ENCODE measurements at regions of chr4 and their contacts with region 1.

Region 1: GRCh38 chr4:44760142-44760898 is 34.0 kb upstream of the GNPDA2 start:
- DNase-seq: no peak
- ATAC-seq: peak; percentile 50 to 73

Region 2: DNA sequence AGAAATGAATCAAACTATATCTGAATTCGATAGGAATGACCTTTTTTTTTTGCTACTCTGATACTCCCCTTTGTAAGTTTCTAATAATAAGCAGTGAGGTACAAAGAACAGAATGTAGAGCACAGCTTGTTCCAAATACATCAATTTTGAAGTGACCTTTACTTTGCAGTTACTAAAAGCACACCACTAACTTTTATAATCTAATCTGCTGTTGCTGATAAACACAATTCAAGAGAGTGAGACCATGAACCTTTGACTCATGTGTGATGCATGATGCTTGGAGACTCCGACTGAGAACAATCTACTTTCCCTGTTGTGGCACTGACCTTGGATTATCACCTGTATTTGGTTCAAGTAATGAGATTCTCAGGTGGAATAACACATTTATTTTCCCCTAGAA is 57.6 kb after region 1 on chr4:
- intact Hi-C with region 1: loop called in 1 of 2 experiments (anchors 5 kb)
- DNase-seq: no peak
- ATAC-seq: peak; percentile 90 to 92

Region 3: GRCh38 chr4:44927399-44928380 is 167.4 kb after region 1 on chr4:
- intact Hi-C with region 1: loop called in 1 of 2 experiments (anchors 10 kb)
- DNase-seq: no peak
- ATAC-seq: no peak

Region 4: DNA sequence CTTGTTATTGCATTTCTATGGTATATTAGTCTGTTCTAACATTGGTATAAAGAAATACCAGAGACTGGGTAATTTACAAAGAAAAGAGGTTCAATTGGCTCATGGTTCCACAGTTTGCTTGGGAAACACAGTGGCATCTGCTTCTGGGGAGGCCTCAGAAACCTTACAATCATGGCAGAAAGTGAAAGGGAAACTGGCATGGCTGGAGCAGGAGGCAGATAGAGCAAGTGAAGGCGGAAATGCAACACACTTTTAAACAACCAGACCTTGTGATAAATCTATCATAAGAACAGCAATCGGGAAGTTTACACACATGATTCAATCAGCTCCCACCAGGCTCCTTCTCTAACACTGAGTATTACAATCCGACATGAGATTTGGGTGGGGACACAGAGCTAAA is 312.7 kb after region 1 on chr4:
- intact Hi-C with region 1: no loop called
- DNase-seq: no peak
- ATAC-seq: no peak